GM12878 (cell line): ENCODE measurements at regions of chr19 and their contacts with region 1.

Region 1: DNA sequence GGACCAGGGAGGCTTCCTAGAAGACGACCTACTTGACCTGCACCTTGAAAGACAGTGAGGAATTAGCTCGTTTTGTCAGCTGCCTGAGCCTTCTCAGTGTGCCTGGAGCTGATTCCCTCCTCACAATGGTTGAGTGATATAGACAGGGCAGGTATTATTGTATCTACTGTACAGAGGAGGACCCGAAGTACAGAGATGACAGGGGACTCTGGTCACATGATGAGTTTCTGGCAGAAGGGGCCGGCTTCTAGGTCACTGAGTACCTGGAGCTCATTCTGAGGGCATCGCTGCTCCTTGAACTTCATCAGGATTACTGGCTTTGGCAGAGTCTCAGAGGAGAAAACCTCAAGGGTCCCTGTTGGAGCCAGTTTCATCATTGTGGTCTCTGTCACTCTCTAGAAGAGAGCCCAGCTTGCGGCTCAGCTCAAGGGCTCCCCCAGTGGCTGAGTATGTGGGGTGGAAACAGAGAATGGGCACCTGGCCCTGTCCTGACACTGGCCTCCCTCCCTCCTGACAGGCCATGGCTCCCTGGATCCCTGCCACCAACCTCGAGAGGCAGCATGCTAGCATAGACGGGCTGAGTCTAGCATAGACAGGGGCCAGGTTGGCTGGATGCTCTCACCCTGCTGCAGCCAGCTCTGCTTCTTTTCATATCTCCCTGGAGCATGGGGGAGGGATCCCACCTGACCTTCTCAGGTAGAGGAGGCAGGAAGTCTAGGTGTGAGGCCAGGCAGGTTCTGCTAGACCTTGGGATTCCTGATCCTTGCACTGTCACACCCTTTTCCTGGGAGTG is 38.7 kb downstream of the NFIX start:
- DNase-seq: no peak
- ATAC-seq: peak; percentile 95
- H3K4me3 ChIP-seq: no peak overlapping the region
- H3K27ac ChIP-seq: no peak overlapping the region
- H3K4me1 ChIP-seq: no peaks in the 10 kb centered on the region
- H3K27me3 ChIP-seq: peaks cover 0 to 2% of the 10 kb centered on the region in 2 experiments; a peak in 2 of 4 replicates
- CTCF ChIP-seq: peak; percentile 71 to 93 (median 90)
- EP300 ChIP-seq: no peak
- POLR2A ChIP-seq: no peak
- RAD21 ChIP-seq: peak; percentile 65

Region 2: DNA sequence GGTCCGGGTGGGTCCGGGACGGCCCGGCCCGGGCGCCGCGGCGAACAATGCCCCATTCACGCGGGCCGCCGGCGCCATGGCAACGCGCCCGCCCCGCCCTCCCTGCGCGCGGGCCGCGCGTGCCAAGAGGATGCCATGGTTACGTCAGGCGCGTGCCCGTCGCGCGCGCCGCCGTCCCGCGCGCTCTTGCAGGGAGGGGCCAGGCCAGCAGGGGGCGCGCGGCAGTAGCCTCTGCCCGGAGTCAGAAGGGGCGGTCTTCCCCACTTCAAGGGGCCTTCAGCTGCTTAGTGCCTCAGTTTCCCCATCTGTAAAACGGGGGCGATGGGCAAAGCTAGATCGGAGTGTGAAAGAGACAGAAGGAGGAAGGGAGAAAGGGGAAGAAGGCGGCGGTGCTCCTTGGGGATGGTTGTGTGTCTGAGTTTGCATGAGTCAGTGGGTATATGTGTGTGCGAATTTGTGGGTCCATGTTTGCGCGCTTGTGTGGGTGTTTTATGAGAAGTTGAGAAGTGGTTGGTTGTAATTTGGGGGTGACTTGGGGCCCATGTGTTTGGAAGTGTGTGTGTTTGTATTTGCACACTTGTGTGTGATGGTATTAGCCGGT is 50.4 kb before region 1 on chr19:
- CTCF ChIA-PET with region 1: interaction called, 30 read pairs
- POLR2A ChIA-PET with region 1: interaction called, 5 read pairs
- RAD21 ChIA-PET with region 1: interaction called, 4 read pairs
- SMC1A ChIA-PET with region 1: no interaction called
- in situ Hi-C with region 1: no loop called
- intact Hi-C with region 1: loop called (anchors 5 kb)
- DNase-seq: no peak
- ATAC-seq: peak; percentile 71
- H3K4me3 ChIP-seq: 0 out of 2 replicates have a peak overlapping the region, but pooled peaks have one; percentile 16
- H3K27ac ChIP-seq: no peak overlapping the region
- H3K4me1 ChIP-seq: no peaks in the 10 kb centered on the region; the same call in 1 of the 2 replicates
- H3K27me3 ChIP-seq: peaks cover 0 to 3% of the 10 kb centered on the region in 2 experiments; a peak in 1 of 4 replicates
- CTCF ChIP-seq: peak; percentile 75 to 90 (median 81)
- EP300 ChIP-seq: no peak
- POLR2A ChIP-seq: no peak
- RAD21 ChIP-seq: peak; percentile 62

Region 3: GRCh38 chr19:13022859-13023636 is 11.0 kb before region 1 on chr19:
- CTCF ChIA-PET with region 1: interaction called, 13 read pairs
- POLR2A ChIA-PET with region 1: no interaction called
- RAD21 ChIA-PET with region 1: no interaction called
- SMC1A ChIA-PET with region 1: interaction called, 4 read pairs
- in situ Hi-C with region 1: no loop called
- intact Hi-C with region 1: no loop called
- DNase-seq: no peak
- ATAC-seq: peak; percentile 73
- H3K4me3 ChIP-seq: peak overlapping the region; percentile 62
- H3K27ac ChIP-seq: 0 out of 2 replicates have a peak overlapping the region, but pooled peaks have one; percentile 40
- H3K4me1 ChIP-seq: peaks cover 16% of the 10 kb centered on the region
- H3K27me3 ChIP-seq: peaks cover 9 to 17% of the 10 kb centered on the region in 2 experiments
- CTCF ChIP-seq: no peak
- EP300 ChIP-seq: no peak
- POLR2A ChIP-seq: no peak
- RAD21 ChIP-seq: no peak

Region 4: GRCh38 chr19:13044231-13044836 is 10.3 kb after region 1 on chr19:
- CTCF ChIA-PET with region 1: interaction called, 21 read pairs
- POLR2A ChIA-PET with region 1: no interaction called
- RAD21 ChIA-PET with region 1: no interaction called
- SMC1A ChIA-PET with region 1: no interaction called
- in situ Hi-C with region 1: no loop called
- intact Hi-C with region 1: no loop called
- DNase-seq: no peak
- ATAC-seq: no peak
- H3K4me3 ChIP-seq: no peak overlapping the region
- H3K27ac ChIP-seq: no peak overlapping the region
- H3K4me1 ChIP-seq: no peaks in the 10 kb centered on the region
- H3K27me3 ChIP-seq: peaks cover 0 to 1% of the 10 kb centered on the region in 2 experiments; a peak in 2 of 4 replicates
- CTCF ChIP-seq: no peak
- EP300 ChIP-seq: peak in 1 of 2 experiments; percentile 27; a peak in 1 of 4 replicates
- POLR2A ChIP-seq: no peak
- RAD21 ChIP-seq: no peak

Region 5: GRCh38 chr19:13060964-13061927 is 27.2 kb after region 1 on chr19:
- CTCF ChIA-PET with region 1: interaction called, 26 read pairs
- POLR2A ChIA-PET with region 1: interaction called, 3 read pairs
- RAD21 ChIA-PET with region 1: interaction called, 9 read pairs
- SMC1A ChIA-PET with region 1: interaction called, 9 read pairs
- in situ Hi-C with region 1: no loop called
- intact Hi-C with region 1: no loop called
- DNase-seq: peak; percentile 11
- ATAC-seq: peak; percentile 99
- H3K4me3 ChIP-seq: peak overlapping the region; percentile 34; the same call in 1 of the 2 replicates
- H3K27ac ChIP-seq: no peak overlapping the region
- H3K4me1 ChIP-seq: no peaks in the 10 kb centered on the region
- H3K27me3 ChIP-seq: peaks cover 9 to 11% of the 10 kb centered on the region in 2 experiments
- CTCF ChIP-seq: peak; percentile 94 to 97 (median 96); a peak in 5 of 6 replicates
- EP300 ChIP-seq: no peak
- POLR2A ChIP-seq: no peak
- RAD21 ChIP-seq: peak; percentile 80